Body of pancreas (tissue), 4 donors: ENCODE measurements at regions of chr3 and their contacts with region 1.

Region 1: GRCh38 chr3:184417619-184418327 is 37.9 kb downstream of the CHRD start:
- DNase-seq: peak; percentile 72 to 81 (median 79)
- ATAC-seq: peak; percentile 90
- H3K4me3 ChIP-seq: no peak overlapping the region
- H3K27ac ChIP-seq: no peak overlapping the region
- H3K4me1 ChIP-seq: no peaks in the 10 kb centered on the region
- H3K27me3 ChIP-seq: no peaks in the 10 kb centered on the region
- CTCF ChIP-seq: peak; percentile 75 to 94 (median 84)
- POLR2A ChIP-seq: no peak

Region 2: GRCh38 chr3:183613366-183614285 is 804.1 kb before region 1 on chr3:
- intact Hi-C with region 1: no loop called
- DNase-seq: no peak
- ATAC-seq: no peak
- H3K4me3 ChIP-seq: no peak overlapping the region
- H3K27ac ChIP-seq: no peak overlapping the region
- H3K4me1 ChIP-seq: no peaks in the 10 kb centered on the region
- H3K27me3 ChIP-seq: no peaks in the 10 kb centered on the region
- CTCF ChIP-seq: no peak
- POLR2A ChIP-seq: no peak

Region 3: GRCh38 chr3:184513276-184514170 is 95.8 kb after region 1 on chr3:
- intact Hi-C with region 1: loop called (anchors 10 kb)
- DNase-seq: peak; percentile 87 to 90 (median 88)
- ATAC-seq: peak; percentile 97
- H3K4me3 ChIP-seq: no peak overlapping the region
- H3K27ac ChIP-seq: no peak overlapping the region
- H3K4me1 ChIP-seq: peaks cover 13% of the 10 kb centered on the region
- H3K27me3 ChIP-seq: no peaks in the 10 kb centered on the region
- CTCF ChIP-seq: peak; percentile 75 to 89 (median 89)
- POLR2A ChIP-seq: no peak